ENCODE measurements at regions of chr7 and their contacts with region 1.

Region 1: GRCh38 chr7:7542251-7542835 is 6.7 kb upstream of the COL28A1 start:
- DNase-seq: no peak
- ATAC-seq: no peak
- H3K4me3 ChIP-seq: no peak overlapping the region
- H3K27ac ChIP-seq: no peak overlapping the region
- H3K4me1 ChIP-seq: no peaks in the 10 kb centered on the region
- H3K27me3 ChIP-seq: no peaks in the 10 kb centered on the region

Region 2: GRCh38 chr7:7103343-7104313 is 438.7 kb before region 1 on chr7:
- intact Hi-C with region 1: loop called (anchors 5 kb)
- DNase-seq: peak in 2 of 3 donors; percentile 50 to 51
- ATAC-seq: peak; percentile 72 to 77
- H3K4me3 ChIP-seq: no peak overlapping the region
- H3K27ac ChIP-seq: no peak overlapping the region
- H3K4me1 ChIP-seq: peaks cover 2% of the 10 kb centered on the region
- H3K27me3 ChIP-seq: no peaks in the 10 kb centered on the region

Region 3: GRCh38 chr7:7109934-7110333 is 432.4 kb before region 1 on chr7:
- intact Hi-C with region 1: loop called in 1 of 4 experiments (anchors 5 kb)
- DNase-seq: no peak
- ATAC-seq: no peak
- H3K4me3 ChIP-seq: no peak overlapping the region
- H3K27ac ChIP-seq: no peak overlapping the region
- H3K4me1 ChIP-seq: peaks cover 1% of the 10 kb centered on the region
- H3K27me3 ChIP-seq: no peaks in the 10 kb centered on the region

Region 4: GRCh38 chr7:7330997-7331396 is 211.3 kb before region 1 on chr7:
- intact Hi-C with region 1: no loop called
- DNase-seq: no peak
- ATAC-seq: no peak
- H3K4me3 ChIP-seq: no peak overlapping the region
- H3K27ac ChIP-seq: no peak overlapping the region
- H3K4me1 ChIP-seq: no peaks in the 10 kb centered on the region
- H3K27me3 ChIP-seq: no peaks in the 10 kb centered on the region

Region 5: DNA sequence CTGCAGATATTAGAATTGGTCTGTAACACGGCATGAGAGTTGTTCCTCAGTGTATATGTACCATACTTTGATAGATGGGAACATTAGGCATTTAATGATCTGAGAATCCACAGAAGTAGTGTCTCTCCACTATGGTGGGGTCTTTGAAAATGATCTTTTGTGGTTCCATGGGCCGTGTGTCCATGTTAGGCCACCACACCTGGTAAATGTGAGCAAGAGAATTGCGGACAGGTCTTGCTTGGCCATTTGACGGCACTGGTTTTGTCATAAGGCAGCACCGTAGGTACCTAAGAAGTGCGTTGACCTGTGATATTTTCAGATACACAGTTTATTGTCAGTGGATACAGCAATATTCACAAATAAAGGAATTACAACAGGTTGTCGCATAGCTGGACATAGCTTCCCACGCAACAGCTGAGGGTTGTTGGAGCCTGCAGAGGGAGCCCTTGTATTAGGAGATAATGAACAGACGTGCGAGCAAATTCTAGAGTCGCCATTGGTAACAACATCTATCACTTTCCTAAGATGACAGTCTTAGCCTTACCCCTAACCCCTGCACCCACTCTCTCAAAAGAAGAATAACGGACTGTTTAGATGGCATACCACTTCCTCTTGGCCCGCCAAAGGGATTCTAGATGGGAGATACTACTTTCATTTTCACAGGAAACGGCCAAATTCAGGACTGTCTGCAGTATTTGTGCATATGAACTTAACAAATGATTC is 118.0 kb before region 1 on chr7:
- intact Hi-C with region 1: loop called (anchors 5 to 10 kb)
- DNase-seq: peak; percentile 34 to 77 (median 60)
- ATAC-seq: peak; percentile 92
- H3K4me3 ChIP-seq: peak overlapping the region; percentile 93
- H3K27ac ChIP-seq: no peak overlapping the region
- H3K4me1 ChIP-seq: no peaks in the 10 kb centered on the region
- H3K27me3 ChIP-seq: no peaks in the 10 kb centered on the region

Region 6: DNA sequence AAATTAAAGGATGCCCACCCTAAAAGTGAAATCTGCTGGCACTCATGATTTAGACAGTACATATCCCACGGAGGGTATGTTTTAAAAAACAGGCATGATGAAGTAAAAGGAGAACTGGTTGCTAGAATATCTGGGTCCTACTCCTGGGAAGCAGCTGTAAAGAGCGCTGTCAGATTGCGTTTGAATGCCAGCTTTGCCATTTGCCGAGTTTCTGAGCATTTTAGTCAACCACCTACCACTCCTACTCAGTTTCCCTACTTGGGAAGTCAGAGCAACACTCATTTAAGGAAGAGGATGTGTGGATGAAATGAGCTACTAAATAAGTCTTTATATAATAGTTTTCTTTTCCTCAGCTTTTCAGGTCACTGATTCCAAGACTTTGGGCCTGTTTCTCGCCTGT is 97.1 kb after region 1 on chr7:
- intact Hi-C with region 1: no loop called
- DNase-seq: no peak
- ATAC-seq: no peak
- H3K4me3 ChIP-seq: peak overlapping the region; percentile 83
- H3K27ac ChIP-seq: no peak overlapping the region
- H3K4me1 ChIP-seq: no peaks in the 10 kb centered on the region
- H3K27me3 ChIP-seq: no peaks in the 10 kb centered on the region

Measured in right cardiac atrium (tissue), 5 donors.